Posterior cingulate gyrus (tissue), 11 donors: ENCODE measurements at regions of chr6 and their contacts with region 1.

Region 1: GRCh38 chr6:106979427-106979884 is 4.9 kb upstream of the CD24 start:
- DNase-seq: peak; percentile 64 to 98 (median 90)

Region 2: DNA sequence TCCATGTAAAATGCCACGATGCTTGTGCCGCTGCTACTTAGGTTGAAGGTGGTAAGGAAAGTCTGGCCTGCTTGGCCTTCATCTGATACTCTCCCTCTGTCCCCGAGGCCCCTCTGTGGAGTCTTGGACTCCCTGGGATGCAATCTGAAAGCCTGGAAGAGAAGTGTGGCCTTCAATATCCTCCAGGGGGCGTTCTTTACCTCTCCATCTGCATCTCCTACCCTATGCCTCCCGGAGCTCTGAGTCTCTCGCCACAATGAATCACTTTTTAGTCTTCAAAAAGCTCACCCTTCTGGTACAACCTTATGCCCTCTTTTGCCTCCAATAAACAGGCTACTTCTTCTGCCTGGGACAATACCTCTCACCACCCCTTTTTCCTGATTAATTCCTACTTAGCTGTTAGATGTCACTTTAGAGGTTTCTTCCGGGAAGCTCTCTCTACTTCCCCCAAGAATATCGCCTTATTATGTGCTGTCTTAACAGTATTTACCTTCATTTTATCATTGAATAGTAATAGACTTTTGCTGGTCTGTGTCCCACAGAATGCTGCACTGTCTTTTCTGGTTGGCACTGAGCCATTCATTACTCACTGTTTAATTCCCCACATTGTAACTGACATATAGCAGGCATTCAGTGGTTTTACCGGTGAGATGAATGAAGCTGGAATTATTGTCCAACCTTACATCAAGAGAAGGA is 640.0 kb before region 1 on chr6:
- intact Hi-C with region 1: loop called (anchors 5 kb)
- DNase-seq: peak in 5 of 10 donors; percentile 9 to 55 (median 39)

Region 3: GRCh38 chr6:106444777-106445507 is 534.5 kb before region 1 on chr6:
- intact Hi-C with region 1: loop called (anchors 1 kb)
- DNase-seq: no peak

Region 4: GRCh38 chr6:106568530-106568929 is 410.9 kb before region 1 on chr6:
- intact Hi-C with region 1: loop called (anchors 5 kb)
- DNase-seq: no peak

Region 5: GRCh38 chr6:106939848-106940247 is 39.6 kb before region 1 on chr6:
- intact Hi-C with region 1: no loop called
- DNase-seq: no peak